Caco-2 (cell line): ENCODE measurements at regions of chr11 and their contacts with region 1.

Region 1: DNA sequence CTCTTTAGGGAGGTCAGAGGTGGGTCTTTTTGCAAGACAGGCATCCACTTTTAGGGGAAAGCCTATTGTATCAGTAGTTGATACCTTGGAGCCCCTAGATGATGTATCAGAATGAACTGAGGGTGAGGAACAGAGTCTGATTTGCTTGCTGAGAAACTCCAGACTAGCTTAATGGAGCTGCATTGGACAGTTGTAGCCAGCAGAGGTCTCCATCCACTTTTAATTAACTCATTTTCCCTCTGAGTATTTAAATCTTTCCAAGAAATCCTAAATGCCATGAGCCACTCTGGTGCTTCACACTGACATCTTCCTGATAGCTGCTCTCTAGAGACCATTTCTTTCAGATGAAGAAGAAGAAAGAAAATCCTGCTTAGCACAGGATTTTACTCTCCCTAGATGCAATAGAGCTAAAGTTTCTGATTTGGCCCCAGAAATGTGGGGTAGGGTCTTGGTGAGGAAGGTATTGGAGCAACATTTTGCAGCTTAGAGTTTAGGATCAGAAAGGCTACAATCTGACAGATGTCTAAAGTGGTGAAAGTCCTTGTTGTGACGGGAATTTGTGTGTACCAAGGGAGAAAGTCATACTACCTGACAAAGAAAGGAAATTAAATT is 38.0 kb downstream of the EXT2 start:
- DNase-seq: peak in 1 of 2 experiments; percentile 24
- H3K4me3 ChIP-seq: no peak overlapping the region
- H3K4me3 Mint-ChIP-seq: no peak overlapping the region
- H3K27ac Mint-ChIP-seq: no peak overlapping the region
- H3K4me1 ChIP-seq: peaks cover 10% of the 10 kb centered on the region; the same call in 1 of the 2 replicates
- H3K4me1 Mint-ChIP-seq: peaks cover 18% of the 10 kb centered on the region
- H3K27me3 ChIP-seq: no peaks in the 10 kb centered on the region
- H3K27me3 Mint-ChIP-seq: no peaks in the 10 kb centered on the region
- CTCF ChIP-seq: peak; percentile 69 to 85

Region 2: DNA sequence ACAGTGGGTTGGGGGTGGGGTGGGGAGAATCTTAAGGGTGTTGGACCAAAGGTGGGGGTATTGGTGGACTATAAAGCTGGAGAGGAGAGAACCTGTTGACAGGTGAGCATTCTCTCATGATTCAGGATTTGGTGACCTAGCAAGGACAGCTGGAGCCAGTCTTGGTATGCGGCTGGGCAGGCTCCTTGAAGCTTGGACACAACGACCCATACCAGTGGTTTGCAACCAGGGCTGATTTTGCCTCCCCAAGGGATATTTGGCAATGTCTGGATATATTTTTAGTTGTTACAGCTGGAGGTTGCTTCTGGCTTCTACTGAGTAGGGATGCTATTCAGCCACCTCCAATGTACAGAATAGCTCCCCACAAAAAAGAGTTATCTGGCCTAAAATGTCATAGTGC is 32.3 kb before region 1 on chr11:
- CTCF ChIA-PET with region 1: no interaction called
- POLR2A ChIA-PET with region 1: no interaction called
- intact Hi-C with region 1: no loop called
- DNase-seq: no peak
- H3K4me3 ChIP-seq: no peak overlapping the region
- H3K4me3 Mint-ChIP-seq: no peak overlapping the region
- H3K27ac Mint-ChIP-seq: no peak overlapping the region
- H3K4me1 ChIP-seq: peaks cover 6% of the 10 kb centered on the region; the same call in 1 of the 2 replicates
- H3K4me1 Mint-ChIP-seq: no peaks in the 10 kb centered on the region
- H3K27me3 ChIP-seq: no peaks in the 10 kb centered on the region
- H3K27me3 Mint-ChIP-seq: no peaks in the 10 kb centered on the region
- CTCF ChIP-seq: no peak

Region 3: DNA sequence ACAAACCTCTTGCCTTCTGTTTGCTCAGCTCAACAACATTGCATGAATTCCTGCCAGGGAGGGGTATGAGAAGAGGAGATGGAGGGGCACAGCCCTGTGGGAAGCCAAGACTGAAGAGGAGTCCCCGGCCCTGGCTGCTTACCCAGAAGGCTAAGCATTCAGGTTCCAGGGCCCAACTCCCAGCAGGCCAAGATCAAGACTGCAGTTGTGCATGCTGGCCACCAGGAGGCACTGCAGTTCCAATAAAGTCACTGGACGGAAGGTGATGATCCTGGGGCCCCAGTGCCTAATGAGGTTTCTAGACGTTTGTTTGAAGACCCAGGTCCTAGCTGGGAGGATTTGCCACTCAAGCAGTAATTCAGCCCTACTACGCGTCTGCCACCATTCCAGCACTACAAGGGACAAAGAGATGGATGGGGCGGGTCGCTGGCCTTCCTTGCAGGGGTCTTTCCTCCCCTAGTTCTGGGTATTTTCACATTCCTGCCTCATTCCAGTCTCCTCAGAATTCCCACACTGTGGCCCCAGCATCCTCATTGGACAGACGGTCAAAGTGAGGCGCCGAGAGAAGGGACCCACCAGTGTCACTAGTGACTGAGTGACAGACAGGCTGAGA is 152.9 kb after region 1 on chr11:
- CTCF ChIA-PET with region 1: interaction called, 9 read pairs
- POLR2A ChIA-PET with region 1: no interaction called
- intact Hi-C with region 1: loop called (anchors 1 kb)
- DNase-seq: peak; percentile 56
- H3K4me3 ChIP-seq: no peak overlapping the region
- H3K4me3 Mint-ChIP-seq: no peak overlapping the region
- H3K27ac Mint-ChIP-seq: peak overlapping the region; percentile 73
- H3K4me1 ChIP-seq: peaks cover 18% of the 10 kb centered on the region
- H3K4me1 Mint-ChIP-seq: peaks cover 17% of the 10 kb centered on the region
- H3K27me3 ChIP-seq: no peaks in the 10 kb centered on the region
- H3K27me3 Mint-ChIP-seq: no peaks in the 10 kb centered on the region
- CTCF ChIP-seq: peak; percentile 92 to 93

Region 4: DNA sequence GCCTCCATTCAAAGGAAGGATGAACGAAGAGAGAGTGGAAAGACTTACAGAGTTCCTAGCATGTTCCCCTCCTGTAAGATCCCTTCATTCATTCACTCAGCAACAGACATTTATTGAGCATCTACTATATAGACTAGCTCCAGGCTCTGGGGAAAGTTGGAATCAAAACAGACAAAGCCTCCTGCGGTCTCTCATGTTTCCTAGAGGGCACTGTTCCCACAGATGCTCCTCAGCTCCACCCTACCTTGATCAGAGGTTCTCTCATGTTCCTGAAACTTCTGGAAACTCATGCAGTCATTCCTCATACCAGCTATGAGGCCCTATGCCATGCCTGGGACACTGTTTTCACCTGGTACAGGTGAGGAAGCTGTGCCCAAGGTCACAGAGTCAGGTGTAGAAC is 165.4 kb after region 1 on chr11:
- CTCF ChIA-PET with region 1: no interaction called
- POLR2A ChIA-PET with region 1: no interaction called
- intact Hi-C with region 1: no loop called
- DNase-seq: no peak
- H3K4me3 ChIP-seq: no peak overlapping the region
- H3K4me3 Mint-ChIP-seq: no peak overlapping the region
- H3K27ac Mint-ChIP-seq: no peak overlapping the region
- H3K4me1 ChIP-seq: no peaks in the 10 kb centered on the region
- H3K4me1 Mint-ChIP-seq: no peaks in the 10 kb centered on the region
- H3K27me3 ChIP-seq: no peaks in the 10 kb centered on the region
- H3K27me3 Mint-ChIP-seq: no peaks in the 10 kb centered on the region
- CTCF ChIP-seq: no peak

Region 5: GRCh38 chr11:44326615-44327475 is 193.4 kb after region 1 on chr11:
- CTCF ChIA-PET with region 1: interaction called, 37 read pairs
- POLR2A ChIA-PET with region 1: no interaction called
- intact Hi-C with region 1: loop called (anchors 1 kb)
- DNase-seq: peak; percentile 35 to 47
- H3K4me3 ChIP-seq: no peak overlapping the region
- H3K4me3 Mint-ChIP-seq: no peak overlapping the region
- H3K27ac Mint-ChIP-seq: no peak overlapping the region
- H3K4me1 ChIP-seq: 0 out of 2 replicates have a peak, but pooled peaks cover 5% of the 10 kb centered on the region
- H3K4me1 Mint-ChIP-seq: peaks cover 8% of the 10 kb centered on the region
- H3K27me3 ChIP-seq: no peaks in the 10 kb centered on the region
- H3K27me3 Mint-ChIP-seq: peaks cover 3% of the 10 kb centered on the region
- CTCF ChIP-seq: peak in 1 of 2 experiments; percentile 45